ENCODE measurements at regions of chr6 and their contacts with region 1.

Region 1: GRCh38 chr6:31739639-31740396 is at the start of gene MSH5:
- DNase-seq: peak; percentile 99
- ATAC-seq: peak; percentile 83
- H3K4me3 Mint-ChIP-seq: peak within 1 kb of the TSS; percentile 92
- H3K27ac Mint-ChIP-seq: peak within 1 kb of the TSS; percentile 96
- H3K4me1 Mint-ChIP-seq: peaks cover 56% of the 10 kb centered on the region
- H3K27me3 Mint-ChIP-seq: no peaks in the 10 kb centered on the region
- total RNA-seq, gene MSH5: 64.8 to 73.6 TPM

Region 2: DNA sequence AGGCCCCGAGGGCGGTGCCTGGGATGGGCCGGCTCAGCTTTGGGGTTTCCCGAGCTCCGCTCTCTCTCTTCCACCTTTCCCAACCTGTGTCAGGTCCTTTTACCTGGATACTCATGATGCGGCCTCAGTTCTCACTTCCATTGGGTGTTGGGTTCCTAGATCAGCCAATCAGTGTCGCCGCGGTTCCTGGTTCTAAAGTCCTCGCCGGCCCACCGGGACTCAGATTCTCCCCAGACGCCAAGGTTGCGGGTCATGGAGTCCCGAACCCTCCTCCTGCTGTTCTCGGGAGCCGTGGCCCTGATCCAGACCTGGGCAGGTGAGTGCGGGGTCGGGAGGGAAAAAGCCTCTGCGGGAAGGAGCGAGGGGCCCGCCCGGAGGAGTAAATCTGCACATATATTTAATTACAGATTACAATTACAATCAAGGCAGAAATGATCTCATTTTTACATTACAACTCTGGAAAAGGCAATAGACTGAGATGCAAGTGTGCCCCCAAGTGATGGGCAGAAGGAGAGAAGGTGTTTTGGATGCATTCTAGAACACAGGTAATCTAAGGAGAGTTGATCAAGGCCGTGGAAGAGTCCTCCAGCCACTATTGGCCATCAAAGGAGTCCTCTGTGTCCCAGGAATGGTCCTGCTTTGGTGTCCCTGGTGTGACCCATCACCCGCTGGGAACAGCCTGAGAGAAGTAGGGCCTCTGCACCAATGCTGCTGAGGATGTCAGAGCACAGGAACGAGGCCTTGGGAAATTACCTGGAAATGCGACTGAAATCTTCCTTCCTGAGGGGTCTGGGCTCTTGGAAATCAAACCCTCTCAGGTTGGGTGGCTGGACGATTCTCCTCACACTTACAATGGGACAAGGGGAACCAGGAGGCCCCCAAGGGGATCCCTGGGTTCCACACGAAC is 276.6 kb before region 1 on chr6:
- CTCF ChIA-PET with region 1: no interaction called
- POLR2A ChIA-PET with region 1: no interaction called
- DNase-seq: peak; percentile 90
- ATAC-seq: peak; percentile 89
- H3K4me3 Mint-ChIP-seq: peak overlapping the region; percentile 98
- H3K27ac Mint-ChIP-seq: peak overlapping the region; percentile 90
- H3K4me1 Mint-ChIP-seq: peaks cover 53% of the 10 kb centered on the region
- H3K27me3 Mint-ChIP-seq: peaks cover 6% of the 10 kb centered on the region

Region 3: GRCh38 chr6:31660381-31661261 is 79.2 kb before region 1 on chr6 and contains the start of gene C6orf47:
- CTCF ChIA-PET with region 1: interaction called, 5 read pairs
- POLR2A ChIA-PET with region 1: interaction called, 42 read pairs
- DNase-seq: peak; percentile 85
- ATAC-seq: peak; percentile 74
- H3K4me3 Mint-ChIP-seq: peak within 1 kb of the TSS; percentile 91
- H3K27ac Mint-ChIP-seq: peak within 1 kb of the TSS; percentile 88
- H3K4me1 Mint-ChIP-seq: peaks cover 85% of the 10 kb centered on the region
- H3K27me3 Mint-ChIP-seq: no peaks in the 10 kb centered on the region
- total RNA-seq, gene C6orf47: 22.5 to 23.8 TPM

Region 4: DNA sequence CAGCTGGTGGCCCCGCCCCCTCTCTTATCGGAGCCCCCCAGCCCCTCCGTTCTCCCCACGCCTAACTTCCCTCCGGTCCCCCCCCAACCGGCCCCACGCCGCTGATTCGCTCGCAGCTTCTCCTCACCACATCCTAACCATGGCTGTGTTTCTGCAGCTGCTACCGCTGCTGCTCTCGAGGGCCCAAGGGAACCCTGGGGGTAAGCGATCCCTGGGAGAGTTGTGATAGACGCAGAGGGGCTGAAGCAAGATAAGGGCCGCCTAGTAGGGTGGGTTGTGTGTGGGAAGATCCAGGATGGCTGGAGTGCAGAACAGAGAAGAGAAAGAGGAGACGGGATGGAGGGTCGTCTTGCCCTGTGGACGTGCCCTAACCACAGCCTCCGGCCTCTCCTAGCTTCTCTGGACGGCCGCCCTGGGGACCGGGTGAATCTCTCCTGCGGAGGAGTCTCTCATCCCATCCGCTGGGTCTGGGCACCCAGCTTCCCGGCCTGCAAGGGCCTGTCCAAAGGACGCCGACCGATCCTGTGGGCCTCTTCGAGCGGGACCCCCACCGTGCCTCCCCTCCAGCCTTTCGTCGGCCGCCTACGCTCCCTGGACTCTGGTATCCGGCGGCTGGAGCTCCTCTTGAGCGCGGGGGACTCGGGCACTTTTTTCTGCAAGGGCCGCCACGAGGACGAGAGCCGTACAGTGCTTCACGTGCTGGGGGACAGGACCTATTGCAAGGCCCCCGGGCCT is 16.4 kb before region 1 on chr6 and contains the start of gene MPIG6B:
- CTCF ChIA-PET with region 1: interaction called, 18 read pairs
- POLR2A ChIA-PET with region 1: interaction called, 83 read pairs
- DNase-seq: peak; percentile 39
- ATAC-seq: no peak
- H3K4me3 Mint-ChIP-seq: peak within 1 kb of the TSS; percentile 25
- H3K27ac Mint-ChIP-seq: peak within 1 kb of the TSS; percentile 85
- H3K4me1 Mint-ChIP-seq: peaks cover 43% of the 10 kb centered on the region
- H3K27me3 Mint-ChIP-seq: peaks cover 8% of the 10 kb centered on the region
- total RNA-seq, gene MPIG6B: 0.71 to 0.91 TPM

Region 5: GRCh38 chr6:31760790-31761742 is 21.2 kb after region 1 on chr6:
- CTCF ChIA-PET with region 1: interaction called, 118 read pairs
- POLR2A ChIA-PET with region 1: interaction called, 16 read pairs
- DNase-seq: no peak
- ATAC-seq: no peak
- H3K4me3 Mint-ChIP-seq: no peak overlapping the region
- H3K27ac Mint-ChIP-seq: peak overlapping the region; percentile 44
- H3K4me1 Mint-ChIP-seq: peaks cover 12% of the 10 kb centered on the region
- H3K27me3 Mint-ChIP-seq: no peaks in the 10 kb centered on the region

Region 6: GRCh38 chr6:31795616-31796298 is 55.9 kb after region 1 on chr6 and contains the start of gene VARS1:
- CTCF ChIA-PET with region 1: interaction called, 23 read pairs
- POLR2A ChIA-PET with region 1: interaction called, 13 read pairs
- DNase-seq: peak; percentile 87
- ATAC-seq: peak; percentile 88
- H3K4me3 Mint-ChIP-seq: peak within 1 kb of the TSS; percentile 97
- H3K27ac Mint-ChIP-seq: peak within 1 kb of the TSS; percentile 98
- H3K4me1 Mint-ChIP-seq: peaks cover 56% of the 10 kb centered on the region
- H3K27me3 Mint-ChIP-seq: no peaks in the 10 kb centered on the region
- total RNA-seq, gene VARS1: 114 to 115 TPM

Region 7: GRCh38 chr6:31827286-31828079 is 87.7 kb after region 1 on chr6 and contains the start of gene HSPA1B:
- CTCF ChIA-PET with region 1: interaction called, 44 read pairs
- POLR2A ChIA-PET with region 1: interaction called, 33 read pairs
- DNase-seq: peak; percentile 99
- ATAC-seq: peak; percentile 78
- H3K4me3 Mint-ChIP-seq: peak within 1 kb of the TSS; percentile 86
- H3K27ac Mint-ChIP-seq: peak within 1 kb of the TSS; percentile 93
- H3K4me1 Mint-ChIP-seq: peaks cover 53% of the 10 kb centered on the region
- H3K27me3 Mint-ChIP-seq: no peaks in the 10 kb centered on the region
- total RNA-seq, gene HSPA1B: 84.6 to 87.1 TPM

Measured in activated CD8-positive, alpha-beta T cell treated with anti-CD3 and anti-CD28 coated beads, Interleukin-2, amount 10 ng/mL, durations not matched to agents 7 days and 5 days (primary cell).